A549 (cell line): ENCODE measurements at regions of chr11 and their contacts with region 1.

Region 1: DNA sequence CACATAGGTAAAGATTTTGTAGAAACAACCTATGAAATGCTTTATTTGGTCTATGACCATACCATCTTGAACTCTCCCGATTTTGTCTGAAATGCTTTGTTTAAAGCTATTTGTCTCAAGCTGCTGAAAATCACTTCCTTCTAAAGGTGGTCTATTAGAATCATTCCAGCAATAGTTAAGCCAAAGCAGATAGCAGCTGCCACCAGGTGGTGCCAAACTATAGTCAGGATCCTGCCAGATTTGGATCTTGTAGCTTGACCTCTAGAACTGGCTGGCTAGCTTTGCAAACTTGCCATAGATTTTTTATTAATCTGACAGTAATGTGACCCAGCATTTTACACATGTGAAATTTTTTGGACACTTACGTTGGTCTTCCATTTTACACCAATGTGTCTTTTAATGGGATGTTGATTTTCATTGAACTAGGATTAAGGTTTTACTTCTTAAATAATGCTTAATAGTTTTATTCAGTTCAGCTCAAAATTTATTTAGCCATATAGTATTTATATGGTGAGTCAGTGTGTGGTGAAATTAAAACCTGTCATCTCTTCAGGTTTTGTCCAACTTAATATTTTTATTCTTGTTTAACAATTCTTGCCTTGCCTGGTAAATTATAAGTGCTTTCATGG is 19.7 kb downstream of the CTR9 start:
- DNase-seq: peak; percentile 60 to 72
- ATAC-seq: peak; percentile 73 to 85; a peak in 4 of 6 replicates
- H3K4me3 ChIP-seq: no peak overlapping the region
- H3K27ac ChIP-seq: no peak overlapping the region
- H3K4me1 ChIP-seq: no peaks in the 10 kb centered on the region
- CTCF ChIP-seq: peak; percentile 87
- EP300 ChIP-seq: no peak
- POLR2A ChIP-seq: no peak
- RAD21 ChIP-seq: peak; percentile 63 to 68

Region 2: DNA sequence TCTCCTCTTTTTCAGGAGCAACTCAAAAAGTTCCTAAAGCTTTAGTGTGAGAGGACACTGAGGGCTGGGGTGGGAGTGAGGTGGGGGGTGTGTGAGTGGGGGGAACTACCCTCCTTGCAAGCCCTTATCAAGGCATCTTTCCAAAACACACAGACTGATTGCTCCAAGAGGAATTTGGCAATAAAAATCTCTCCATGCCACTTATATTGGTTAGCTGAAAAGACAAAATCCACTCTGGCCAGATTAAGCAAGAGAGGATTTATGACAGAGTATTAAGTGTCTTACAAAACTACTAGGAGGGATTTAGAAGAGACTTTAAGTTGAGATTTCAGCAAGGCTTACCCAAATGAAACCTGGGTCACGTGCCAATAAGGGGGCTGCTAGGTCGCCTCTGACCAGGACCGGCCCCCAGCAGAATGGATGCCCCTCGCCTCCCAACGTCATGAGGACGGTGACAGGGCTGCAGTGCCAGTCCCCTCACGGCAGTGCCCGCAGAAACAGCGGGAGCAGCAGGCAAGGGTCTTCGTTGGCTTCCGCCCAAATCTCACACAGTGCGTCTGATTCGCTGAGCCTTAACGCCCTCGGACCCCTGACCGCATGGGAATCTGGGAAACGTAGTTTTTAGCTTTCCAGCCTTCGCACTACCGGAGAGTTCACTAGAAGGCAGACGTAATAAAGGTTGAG is 41.8 kb before region 1 on chr11:
- CTCF ChIA-PET with region 1: no interaction called
- POLR2A ChIA-PET with region 1: no interaction called
- DNase-seq: no peak
- ATAC-seq: no peak
- H3K4me3 ChIP-seq: no peak overlapping the region
- H3K27ac ChIP-seq: no peak overlapping the region
- H3K4me1 ChIP-seq: no peaks in the 10 kb centered on the region
- CTCF ChIP-seq: no peak
- EP300 ChIP-seq: no peak
- POLR2A ChIP-seq: no peak
- RAD21 ChIP-seq: no peak

Region 3: GRCh38 chr11:10784232-10785145 is 13.7 kb after region 1 on chr11:
- CTCF ChIA-PET with region 1: interaction called, 58 read pairs
- POLR2A ChIA-PET with region 1: no interaction called
- DNase-seq: no peak
- ATAC-seq: no peak
- H3K4me3 ChIP-seq: no peak overlapping the region
- H3K27ac ChIP-seq: no peak overlapping the region
- H3K4me1 ChIP-seq: no peaks in the 10 kb centered on the region
- CTCF ChIP-seq: no peak
- EP300 ChIP-seq: no peak
- POLR2A ChIP-seq: no peak
- RAD21 ChIP-seq: no peak

Region 4: DNA sequence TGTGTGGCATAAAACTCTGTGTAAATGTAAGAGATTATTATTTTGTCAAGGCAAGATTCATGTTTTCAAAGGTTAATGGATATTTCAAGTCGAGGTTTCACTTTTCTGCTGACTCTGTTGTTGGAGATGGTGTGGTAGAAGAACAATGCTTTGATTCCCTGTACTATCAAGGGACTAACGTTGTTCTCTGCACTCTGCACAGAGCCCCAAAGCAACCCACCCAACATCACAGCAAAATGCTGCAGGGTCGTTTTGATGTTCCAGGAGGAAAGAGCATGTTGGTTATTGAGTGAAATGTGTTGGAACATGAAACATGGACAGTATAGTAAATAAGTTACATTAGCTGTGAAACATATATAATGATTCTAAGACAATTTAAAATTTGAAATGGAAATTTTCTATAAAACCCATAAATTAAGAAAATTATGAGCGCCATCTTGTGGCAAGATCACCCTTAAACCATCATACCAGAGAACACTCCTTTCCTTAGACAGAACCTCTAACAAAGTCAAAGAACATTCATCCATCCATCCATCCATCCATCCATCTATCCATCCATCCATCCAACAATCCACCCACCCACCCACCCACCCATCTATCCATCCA is 251.5 kb after region 1 on chr11:
- CTCF ChIA-PET with region 1: interaction called, 14 read pairs
- POLR2A ChIA-PET with region 1: no interaction called
- DNase-seq: peak; percentile 16 to 55
- ATAC-seq: peak; percentile 48 to 77; a peak in 3 of 6 replicates
- H3K4me3 ChIP-seq: no peak overlapping the region
- H3K27ac ChIP-seq: peak overlapping the region; percentile 18 to 20; a peak in 2 of 6 replicates
- H3K4me1 ChIP-seq: peaks cover 9% of the 10 kb centered on the region
- CTCF ChIP-seq: peak; percentile 76
- EP300 ChIP-seq: no peak
- POLR2A ChIP-seq: no peak
- RAD21 ChIP-seq: peak; percentile 78 to 86